H1 (cell line): ENCODE measurements at regions of chr1 and their contacts with region 1.

Region 1: GRCh38 chr1:22527555-22528296 is 35.6 kb upstream of the EPHA8 start:
- DNase-seq: no peak
- H3K4me3 ChIP-seq: no peak overlapping the region
- H3K27ac ChIP-seq: no peak overlapping the region
- H3K4me1 ChIP-seq: no peaks in the 10 kb centered on the region
- H3K27me3 ChIP-seq: no peaks in the 10 kb centered on the region
- CTCF ChIP-seq: peak in 2 of 3 experiments; percentile 57 to 66; a peak in 3 of 4 replicates
- EP300 ChIP-seq: no peak
- POLR2A ChIP-seq: no peak
- RAD21 ChIP-seq: peak; percentile 79 to 87

Region 2: GRCh38 chr1:22231993-22232690 is 295.6 kb before region 1 on chr1:
- CTCF ChIA-PET with region 1: no interaction called
- POLR2A ChIA-PET with region 1: no interaction called
- DNase-seq: no peak
- H3K4me3 ChIP-seq: no peak overlapping the region
- H3K27ac ChIP-seq: no peak overlapping the region
- H3K4me1 ChIP-seq: peaks cover 15 to 38% (median 21%) of the 10 kb centered on the region in 4 experiments
- H3K27me3 ChIP-seq: no peaks in the 10 kb centered on the region; a peak in 1 of 7 replicates
- CTCF ChIP-seq: no peak
- EP300 ChIP-seq: no peak
- POLR2A ChIP-seq: no peak
- RAD21 ChIP-seq: 0 out of 4 replicates have a peak, but pooled peaks have one; percentile 18 to 20

Region 3: DNA sequence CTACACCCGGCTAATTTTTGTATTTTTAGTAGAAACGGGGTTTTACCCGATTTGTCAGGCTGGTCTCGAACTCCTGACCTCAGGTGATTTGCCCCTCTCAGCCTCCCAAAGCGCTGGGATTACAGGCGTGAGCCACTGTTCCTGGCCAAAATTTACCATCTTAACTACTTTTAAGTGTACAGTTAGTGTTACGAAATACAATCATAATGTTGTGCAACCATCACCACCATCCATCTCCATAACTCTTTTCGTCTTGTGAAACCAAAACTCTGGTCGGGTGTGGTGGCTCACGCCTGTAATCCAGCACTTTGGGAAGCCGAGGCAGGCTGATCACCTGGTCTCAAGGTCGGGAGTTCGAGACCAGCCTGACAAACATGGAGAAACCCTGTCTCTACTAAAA is 90.2 kb before region 1 on chr1:
- CTCF ChIA-PET with region 1: no interaction called
- POLR2A ChIA-PET with region 1: no interaction called
- DNase-seq: no peak
- H3K4me3 ChIP-seq: no peak overlapping the region
- H3K27ac ChIP-seq: no peak overlapping the region
- H3K4me1 ChIP-seq: peaks cover 1 to 6% (median 4%) of the 10 kb centered on the region in 4 experiments; a peak in 3 of 7 replicates
- H3K27me3 ChIP-seq: no peaks in the 10 kb centered on the region
- CTCF ChIP-seq: no peak
- EP300 ChIP-seq: no peak
- POLR2A ChIP-seq: no peak
- RAD21 ChIP-seq: no peak

Region 4: DNA sequence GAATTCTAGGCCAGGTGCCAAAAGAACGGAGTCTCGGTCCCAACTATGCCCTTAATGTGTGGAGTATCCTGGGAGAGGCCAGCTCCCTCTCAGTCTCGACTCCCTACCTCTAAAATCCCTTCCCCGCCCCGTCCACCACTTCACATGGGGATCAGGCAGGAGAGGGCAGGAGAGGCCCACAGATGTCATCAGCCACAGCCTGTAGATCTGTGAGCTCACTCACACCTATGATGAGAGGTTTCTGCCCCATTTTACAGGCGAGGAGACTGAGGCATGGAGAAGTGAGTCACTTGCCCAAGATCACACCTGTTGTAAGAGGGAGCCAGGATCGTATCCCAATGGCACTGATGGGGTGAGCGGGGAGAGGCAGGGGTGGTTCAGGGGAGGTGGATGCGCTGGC is 15.2 kb after region 1 on chr1:
- CTCF ChIA-PET with region 1: interaction called, 11 read pairs
- POLR2A ChIA-PET with region 1: interaction called, 5 read pairs
- DNase-seq: no peak
- H3K4me3 ChIP-seq: no peak overlapping the region
- H3K27ac ChIP-seq: no peak overlapping the region
- H3K4me1 ChIP-seq: peaks cover 0 to 2% (median 0%) of the 10 kb centered on the region in 4 experiments; a peak in 1 of 7 replicates
- H3K27me3 ChIP-seq: peaks cover 0 to 4% (median 0%) of the 10 kb centered on the region in 4 experiments; a peak in 1 of 7 replicates
- CTCF ChIP-seq: peak in 2 of 3 experiments; percentile 19 to 31; a peak in 2 of 4 replicates
- EP300 ChIP-seq: no peak
- POLR2A ChIP-seq: no peak
- RAD21 ChIP-seq: peak; percentile 52 to 64

Region 5: GRCh38 chr1:22582661-22583635 is 55.2 kb after region 1 on chr1:
- CTCF ChIA-PET with region 1: interaction called, 15 read pairs
- POLR2A ChIA-PET with region 1: no interaction called
- DNase-seq: no peak
- H3K4me3 ChIP-seq: no peak overlapping the region
- H3K27ac ChIP-seq: no peak overlapping the region
- H3K4me1 ChIP-seq: no peaks in the 10 kb centered on the region
- H3K27me3 ChIP-seq: no peaks in the 10 kb centered on the region
- CTCF ChIP-seq: no peak
- EP300 ChIP-seq: no peak
- POLR2A ChIP-seq: no peak
- RAD21 ChIP-seq: no peak

Region 6: GRCh38 chr1:22636353-22636752 is 108.6 kb after region 1 on chr1 and contains the start of gene C1QA:
- CTCF ChIA-PET with region 1: interaction called, 70 read pairs
- POLR2A ChIA-PET with region 1: interaction called, 4 read pairs
- DNase-seq: no peak
- H3K4me3 ChIP-seq: no peak within 1 kb of the TSS; a peak in 1 of 8 replicates
- H3K27ac ChIP-seq: no peak within 1 kb of the TSS
- H3K4me1 ChIP-seq: peaks cover 0 to 6% (median 4%) of the 10 kb centered on the region in 4 experiments; a peak in 4 of 7 replicates
- H3K27me3 ChIP-seq: no peaks in the 10 kb centered on the region
- CTCF ChIP-seq: no peak
- EP300 ChIP-seq: no peak
- POLR2A ChIP-seq: no peak
- RAD21 ChIP-seq: no peak
- total RNA-seq, gene C1QA: not detected in 2 replicates